B cell (primary cell): ENCODE measurements at regions of chr3 and their contacts with region 1.

Region 1: DNA sequence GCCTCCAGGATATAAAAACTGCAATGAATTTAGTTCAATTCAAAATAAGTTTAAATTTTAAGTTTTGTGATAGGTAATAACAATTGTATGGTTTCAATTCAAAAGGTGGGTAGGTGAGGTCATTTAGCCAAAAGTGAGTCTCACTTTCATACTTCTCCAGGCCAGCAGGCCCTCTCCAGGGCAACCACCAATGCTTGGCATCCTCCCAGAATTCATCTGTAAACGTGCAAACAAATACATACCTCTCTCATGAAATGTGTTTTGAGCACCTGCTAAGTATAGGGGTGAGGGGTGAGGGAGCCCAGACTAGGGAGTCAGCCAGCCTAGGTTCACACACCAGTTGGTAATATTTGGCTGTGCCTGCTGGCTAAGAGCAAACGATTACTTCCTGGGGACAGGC is 22.0 kb upstream of the RBSN start:
- DNase-seq: peak; percentile 1
- ATAC-seq: no peak
- H3K4me3 ChIP-seq: no peak overlapping the region
- H3K4me3 Mint-ChIP-seq: no peak overlapping the region
- H3K27ac ChIP-seq: no peak overlapping the region
- H3K27ac Mint-ChIP-seq: no peak overlapping the region
- H3K4me1 ChIP-seq: no peaks in the 10 kb centered on the region
- H3K4me1 Mint-ChIP-seq: peaks cover 2% of the 10 kb centered on the region
- H3K27me3 ChIP-seq: peaks cover 0 to 6% (median 0%) of the 10 kb centered on the region in 4 experiments
- H3K27me3 Mint-ChIP-seq: no peaks in the 10 kb centered on the region
- CTCF ChIP-seq: no peak

Region 2: GRCh38 chr3:14402304-14402811 is 718.6 kb before region 1 on chr3 and contains the start of gene SLC6A6:
- CTCF ChIA-PET with region 1: no interaction called
- POLR2A ChIA-PET with region 1: no interaction called
- intact Hi-C with region 1: no loop called
- DNase-seq: peak; percentile 97
- ATAC-seq: peak; percentile 80
- H3K4me3 ChIP-seq: peak within 1 kb of the TSS; percentile 53 to 87 (median 85)
- H3K4me3 Mint-ChIP-seq: peak within 1 kb of the TSS; percentile 99
- H3K27ac ChIP-seq: peak within 1 kb of the TSS; percentile 81 to 89
- H3K27ac Mint-ChIP-seq: peak within 1 kb of the TSS; percentile 98
- H3K4me1 ChIP-seq: peaks cover 39 to 55% of the 10 kb centered on the region in 2 donors
- H3K4me1 Mint-ChIP-seq: peaks cover 60% of the 10 kb centered on the region
- H3K27me3 ChIP-seq: no peaks in the 10 kb centered on the region
- H3K27me3 Mint-ChIP-seq: no peaks in the 10 kb centered on the region
- CTCF ChIP-seq: peak; percentile 67
- total RNA-seq, gene SLC6A6: 48.7 and 50.1 TPM in 2 replicates

Region 3: GRCh38 chr3:14943042-14943441 is 177.9 kb before region 1 on chr3:
- CTCF ChIA-PET with region 1: no interaction called
- POLR2A ChIA-PET with region 1: no interaction called
- intact Hi-C with region 1: no loop called
- DNase-seq: no peak
- ATAC-seq: no peak
- H3K4me3 ChIP-seq: no peak overlapping the region
- H3K4me3 Mint-ChIP-seq: no peak overlapping the region
- H3K27ac ChIP-seq: no peak overlapping the region
- H3K27ac Mint-ChIP-seq: no peak overlapping the region
- H3K4me1 ChIP-seq: peaks cover 11 to 14% of the 10 kb centered on the region in 2 donors
- H3K4me1 Mint-ChIP-seq: peaks cover 27% of the 10 kb centered on the region
- H3K27me3 ChIP-seq: no peaks in the 10 kb centered on the region
- H3K27me3 Mint-ChIP-seq: no peaks in the 10 kb centered on the region
- CTCF ChIP-seq: no peak

Region 4: DNA sequence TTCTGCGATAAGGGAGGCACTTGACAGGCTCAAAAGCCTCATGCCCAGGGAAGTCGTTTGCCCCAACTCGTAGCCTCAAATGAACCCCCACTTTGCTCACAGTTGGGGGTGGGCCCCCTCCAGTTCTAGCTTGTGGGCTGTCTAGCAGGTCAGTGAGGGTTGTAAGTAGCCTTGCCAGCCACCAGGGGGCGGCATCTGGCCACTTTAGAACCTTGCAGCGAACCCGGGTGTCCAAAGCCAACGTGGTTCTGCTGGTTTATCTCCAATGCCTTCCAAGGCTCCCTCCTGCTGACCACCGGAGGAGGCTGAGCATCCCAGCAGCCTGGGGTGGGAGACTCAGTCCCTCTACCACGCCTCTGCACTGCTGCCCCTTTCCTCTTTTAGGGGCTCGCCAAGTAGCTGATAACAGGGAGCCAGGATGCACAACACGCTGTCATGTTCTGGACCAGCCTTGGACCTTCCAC is 12.9 kb before region 1 on chr3:
- CTCF ChIA-PET with region 1: interaction called, 41 read pairs
- POLR2A ChIA-PET with region 1: no interaction called
- intact Hi-C with region 1: no loop called
- DNase-seq: peak; percentile 82
- ATAC-seq: peak; percentile 98
- H3K4me3 ChIP-seq: no peak overlapping the region
- H3K4me3 Mint-ChIP-seq: no peak overlapping the region
- H3K27ac ChIP-seq: no peak overlapping the region
- H3K27ac Mint-ChIP-seq: no peak overlapping the region
- H3K4me1 ChIP-seq: peaks cover 3 to 6% of the 10 kb centered on the region in 2 donors
- H3K4me1 Mint-ChIP-seq: peaks cover 6% of the 10 kb centered on the region
- H3K27me3 ChIP-seq: peaks cover 0 to 9% (median 0%) of the 10 kb centered on the region in 4 experiments
- H3K27me3 Mint-ChIP-seq: peaks cover 4% of the 10 kb centered on the region
- CTCF ChIP-seq: peak; percentile 90